ENCODE measurements at regions of chr20 and their contacts with region 1.

Region 1: GRCh38 chr20:32249030-32249738 is 28.3 kb upstream of the KIF3B start:
- DNase-seq: peak; percentile 55
- H3K4me3 Mint-ChIP-seq: no peak overlapping the region
- H3K27ac Mint-ChIP-seq: peak overlapping the region; percentile 89
- H3K4me1 Mint-ChIP-seq: peaks cover 55% of the 10 kb centered on the region
- H3K27me3 Mint-ChIP-seq: no peaks in the 10 kb centered on the region

Region 2: DNA sequence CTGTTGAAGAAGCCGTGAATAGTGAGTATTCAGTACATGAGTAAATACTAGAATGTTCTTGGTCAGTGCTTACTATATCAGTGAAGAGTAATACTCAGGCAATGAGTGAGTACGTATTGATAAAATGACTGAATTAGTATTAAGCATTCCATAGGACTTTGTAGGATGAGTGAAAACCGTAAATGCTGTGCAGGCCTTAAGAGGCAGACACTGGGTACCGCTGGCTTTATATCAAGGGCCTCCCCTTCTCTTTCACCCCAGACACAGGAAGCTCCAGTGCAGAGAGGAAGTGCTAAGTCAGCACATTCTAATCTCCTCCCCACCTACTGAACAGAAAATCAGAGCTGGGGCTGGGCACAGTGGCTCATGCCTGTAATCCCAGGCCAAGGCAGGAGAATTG is 17.3 kb before region 1 on chr20:
- CTCF ChIA-PET with region 1: no interaction called
- POLR2A ChIA-PET with region 1: interaction called, 8 read pairs
- intact Hi-C with region 1: loop called (anchors 1 kb)
- DNase-seq: peak; percentile 75
- H3K4me3 Mint-ChIP-seq: peak overlapping the region; percentile 45
- H3K27ac Mint-ChIP-seq: peak overlapping the region; percentile 97
- H3K4me1 Mint-ChIP-seq: peaks cover 50% of the 10 kb centered on the region
- H3K27me3 Mint-ChIP-seq: no peaks in the 10 kb centered on the region

Region 3: DNA sequence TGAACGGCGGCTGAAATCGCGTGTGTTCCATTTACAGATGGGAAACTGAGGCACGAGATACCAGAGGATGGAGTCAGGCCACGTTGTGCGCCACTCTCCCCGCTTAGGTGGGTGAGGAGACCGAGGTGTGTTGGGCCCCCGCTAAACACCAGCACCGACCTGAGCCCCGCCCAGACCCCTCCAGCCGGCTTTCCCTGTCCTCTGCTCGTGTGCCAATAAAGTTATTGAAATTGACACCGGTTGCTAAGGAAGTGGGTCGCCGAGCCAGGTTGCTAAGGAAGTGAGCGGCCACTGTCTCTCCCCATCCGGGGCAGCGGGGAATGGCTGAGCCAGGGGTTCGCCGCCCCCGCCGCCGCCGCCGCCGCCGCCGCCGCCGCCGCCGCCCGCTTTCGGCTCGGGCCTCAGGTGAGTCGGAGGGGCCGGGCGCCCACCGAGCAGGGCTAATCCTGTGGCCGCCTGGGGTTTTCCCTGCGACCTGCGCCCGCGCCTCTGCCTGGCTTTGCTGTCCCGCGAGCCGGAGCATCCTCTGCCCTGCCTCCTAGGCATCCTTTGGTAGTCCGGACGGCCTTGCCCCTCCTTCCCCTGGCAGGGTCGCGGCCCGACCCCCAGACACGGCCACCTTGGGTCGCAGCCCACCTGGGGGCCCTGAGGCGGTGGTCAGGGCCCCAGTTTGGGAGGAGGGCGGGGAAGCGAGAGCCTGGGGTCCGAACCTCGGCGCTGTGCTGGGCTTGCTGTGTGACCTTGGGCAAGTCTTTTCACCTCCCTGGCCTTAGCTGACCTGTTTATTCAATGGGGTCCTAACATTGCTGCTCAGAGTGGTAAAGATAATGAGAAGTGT is 28.4 kb after region 1 on chr20 and contains the start of gene KIF3B:
- CTCF ChIA-PET with region 1: no interaction called
- POLR2A ChIA-PET with region 1: interaction called, 3 read pairs
- intact Hi-C with region 1: loop called (anchors 1 kb)
- DNase-seq: peak; percentile 93
- H3K4me3 Mint-ChIP-seq: peak within 1 kb of the TSS; percentile 89
- H3K27ac Mint-ChIP-seq: peak within 1 kb of the TSS; percentile 95
- H3K4me1 Mint-ChIP-seq: peaks cover 51% of the 10 kb centered on the region
- H3K27me3 Mint-ChIP-seq: peaks cover 1% of the 10 kb centered on the region
- total RNA-seq, gene KIF3B: 38.9 to 39.4 TPM

Measured in activated CD4-positive, alpha-beta memory T cell treated with anti-CD3 and anti-CD28 coated beads for 36 hours (primary cell).